H1 (cell line): ENCODE measurements at regions of chr4 and their contacts with region 1.

Region 1: GRCh38 chr4:175998777-175999176 is 66.9 kb upstream of the WDR17 start:
- DNase-seq: peak; percentile 43 to 72
- H3K4me3 ChIP-seq: no peak overlapping the region
- H3K27ac ChIP-seq: no peak overlapping the region
- H3K4me1 ChIP-seq: peaks cover 0 to 3% (median 1%) of the 10 kb centered on the region in 4 experiments; a peak in 2 of 7 replicates
- H3K27me3 ChIP-seq: peaks cover 0 to 13% (median 4%) of the 10 kb centered on the region in 4 experiments; a peak in 4 of 7 replicates
- CTCF ChIP-seq: no peak
- EP300 ChIP-seq: peak in 1 of 2 experiments; percentile 70; a peak in 1 of 3 replicates
- POLR2A ChIP-seq: no peak
- RAD21 ChIP-seq: no peak

Region 2: DNA sequence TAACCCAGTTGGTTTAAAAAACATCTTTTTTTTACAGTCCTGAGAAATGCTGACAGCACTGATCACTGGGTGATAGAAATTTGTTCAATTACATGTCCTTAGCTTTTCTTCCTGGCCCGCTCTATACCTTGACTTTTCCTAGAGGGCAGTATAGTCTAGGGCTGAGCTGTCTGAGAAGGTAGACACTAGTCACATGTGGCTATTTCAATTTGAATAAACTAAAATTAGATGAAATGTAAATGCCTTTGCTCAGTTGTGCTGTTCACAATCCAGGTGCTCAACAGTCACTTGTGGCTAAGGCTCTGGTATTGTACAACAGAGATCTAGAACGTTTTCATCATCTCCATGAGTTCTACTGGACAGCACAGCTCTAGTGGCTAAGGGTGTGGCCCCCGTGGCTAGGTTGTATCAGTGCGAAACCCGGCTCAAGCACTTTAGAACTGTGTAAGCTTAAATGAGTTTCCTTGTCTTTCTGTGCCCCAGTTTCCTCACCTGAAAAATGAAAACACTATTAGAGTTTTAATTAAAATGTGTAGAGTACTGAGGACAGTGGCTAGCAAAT is 44.7 kb before region 1 on chr4:
- CTCF ChIA-PET with region 1: interaction called, 15 read pairs
- POLR2A ChIA-PET with region 1: interaction called, 3 read pairs
- DNase-seq: no peak
- H3K4me3 ChIP-seq: no peak overlapping the region
- H3K27ac ChIP-seq: no peak overlapping the region
- H3K4me1 ChIP-seq: no peaks in the 10 kb centered on the region
- H3K27me3 ChIP-seq: no peaks in the 10 kb centered on the region
- CTCF ChIP-seq: peak in 2 of 3 experiments; percentile 43 to 64; a peak in 2 of 4 replicates
- EP300 ChIP-seq: no peak
- POLR2A ChIP-seq: no peak
- RAD21 ChIP-seq: peak; percentile 74 to 75

Region 3: DNA sequence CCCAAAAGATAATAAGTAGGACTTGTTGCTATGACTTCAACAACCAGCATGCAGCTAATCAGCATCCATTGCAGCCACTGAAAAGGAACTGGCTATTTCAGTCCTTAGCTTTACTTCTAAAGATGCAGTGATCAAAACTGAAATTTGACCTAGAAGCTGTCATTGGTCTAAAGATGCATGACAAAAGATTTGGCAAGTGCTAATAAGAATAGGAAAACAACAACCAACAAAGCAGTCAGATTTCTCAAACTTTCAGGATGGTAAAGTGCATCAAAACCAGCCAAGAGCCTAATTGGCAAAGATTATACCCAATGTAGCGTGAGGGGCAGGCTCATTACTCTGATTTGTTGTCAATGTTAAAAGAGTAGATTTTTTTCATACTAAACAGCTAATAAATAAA is 10.3 kb before region 1 on chr4:
- CTCF ChIA-PET with region 1: interaction called, 10 read pairs
- POLR2A ChIA-PET with region 1: interaction called, 5 read pairs
- DNase-seq: no peak
- H3K4me3 ChIP-seq: no peak overlapping the region
- H3K27ac ChIP-seq: no peak overlapping the region
- H3K4me1 ChIP-seq: peaks cover 0 to 5% (median 0%) of the 10 kb centered on the region in 4 experiments; a peak in 1 of 7 replicates
- H3K27me3 ChIP-seq: no peaks in the 10 kb centered on the region
- CTCF ChIP-seq: no peak
- EP300 ChIP-seq: no peak
- POLR2A ChIP-seq: no peak
- RAD21 ChIP-seq: no peak